ENCODE measurements at regions of chr11 and their contacts with region 1.

Region 1: GRCh38 chr11:102451681-102452460 is 694 bp downstream of the TMEM123 start:
- DNase-seq: no peak
- H3K4me3 ChIP-seq: peak overlapping the region; percentile 76 to 97 (median 80)
- H3K27ac ChIP-seq: peak overlapping the region; percentile 82 to 90 (median 90)
- H3K4me1 ChIP-seq: peaks cover 18 to 42% (median 37%) of the 10 kb centered on the region in 4 donors
- H3K27me3 ChIP-seq: no peaks in the 10 kb centered on the region
- CTCF ChIP-seq: peak in 1 of 3 experiments; percentile 24
- EP300 ChIP-seq: no peak
- POLR2A ChIP-seq: no peak

Region 2: GRCh38 chr11:102390667-102391465 is 61.0 kb before region 1 on chr11:
- intact Hi-C with region 1: loop called (anchors 5 kb)
- DNase-seq: no peak
- H3K4me3 ChIP-seq: no peak overlapping the region
- H3K27ac ChIP-seq: no peak overlapping the region
- H3K4me1 ChIP-seq: peaks cover 0 to 9% (median 4%) of the 10 kb centered on the region in 4 donors
- H3K27me3 ChIP-seq: no peaks in the 10 kb centered on the region
- CTCF ChIP-seq: peak; percentile 70 to 97 (median 77)
- EP300 ChIP-seq: no peak
- POLR2A ChIP-seq: no peak

Measured in esophagus muscularis mucosa (tissue), 4 donors.